ENCODE measurements at regions of chr5 and their contacts with region 1.

Region 1: GRCh38 chr5:34522599-34523386 is 133.3 kb upstream of the RAI14 start:
- DNase-seq: peak; percentile 73
- H3K4me3 Mint-ChIP-seq: no peak overlapping the region
- H3K27ac Mint-ChIP-seq: peak overlapping the region; percentile 34
- H3K4me1 Mint-ChIP-seq: peaks cover 17% of the 10 kb centered on the region
- H3K27me3 Mint-ChIP-seq: no peaks in the 10 kb centered on the region
- CTCF ChIP-seq: peak; percentile 55

Region 2: GRCh38 chr5:34486160-34486848 is 36.5 kb before region 1 on chr5:
- CTCF ChIA-PET with region 1: no interaction called
- intact Hi-C with region 1: loop called (anchors 5 kb)
- DNase-seq: peak; percentile 76
- H3K4me3 Mint-ChIP-seq: no peak overlapping the region
- H3K27ac Mint-ChIP-seq: no peak overlapping the region
- H3K4me1 Mint-ChIP-seq: peaks cover 32% of the 10 kb centered on the region
- H3K27me3 Mint-ChIP-seq: no peaks in the 10 kb centered on the region
- CTCF ChIP-seq: peak; percentile 70

Region 3: GRCh38 chr5:34570721-34571676 is 48.2 kb after region 1 on chr5:
- CTCF ChIA-PET with region 1: no interaction called
- intact Hi-C with region 1: no loop called
- DNase-seq: no peak
- H3K4me3 Mint-ChIP-seq: no peak overlapping the region
- H3K27ac Mint-ChIP-seq: no peak overlapping the region
- H3K4me1 Mint-ChIP-seq: peaks cover 15% of the 10 kb centered on the region
- H3K27me3 Mint-ChIP-seq: no peaks in the 10 kb centered on the region
- CTCF ChIP-seq: no peak

Region 4: GRCh38 chr5:34587355-34588241 is 64.8 kb after region 1 on chr5:
- CTCF ChIA-PET with region 1: interaction called, 3 read pairs
- intact Hi-C with region 1: loop called (anchors 5 kb)
- DNase-seq: no peak
- H3K4me3 Mint-ChIP-seq: no peak overlapping the region
- H3K27ac Mint-ChIP-seq: peak overlapping the region; percentile 55
- H3K4me1 Mint-ChIP-seq: peaks cover 40% of the 10 kb centered on the region
- H3K27me3 Mint-ChIP-seq: no peaks in the 10 kb centered on the region
- CTCF ChIP-seq: no peak

Region 5: DNA sequence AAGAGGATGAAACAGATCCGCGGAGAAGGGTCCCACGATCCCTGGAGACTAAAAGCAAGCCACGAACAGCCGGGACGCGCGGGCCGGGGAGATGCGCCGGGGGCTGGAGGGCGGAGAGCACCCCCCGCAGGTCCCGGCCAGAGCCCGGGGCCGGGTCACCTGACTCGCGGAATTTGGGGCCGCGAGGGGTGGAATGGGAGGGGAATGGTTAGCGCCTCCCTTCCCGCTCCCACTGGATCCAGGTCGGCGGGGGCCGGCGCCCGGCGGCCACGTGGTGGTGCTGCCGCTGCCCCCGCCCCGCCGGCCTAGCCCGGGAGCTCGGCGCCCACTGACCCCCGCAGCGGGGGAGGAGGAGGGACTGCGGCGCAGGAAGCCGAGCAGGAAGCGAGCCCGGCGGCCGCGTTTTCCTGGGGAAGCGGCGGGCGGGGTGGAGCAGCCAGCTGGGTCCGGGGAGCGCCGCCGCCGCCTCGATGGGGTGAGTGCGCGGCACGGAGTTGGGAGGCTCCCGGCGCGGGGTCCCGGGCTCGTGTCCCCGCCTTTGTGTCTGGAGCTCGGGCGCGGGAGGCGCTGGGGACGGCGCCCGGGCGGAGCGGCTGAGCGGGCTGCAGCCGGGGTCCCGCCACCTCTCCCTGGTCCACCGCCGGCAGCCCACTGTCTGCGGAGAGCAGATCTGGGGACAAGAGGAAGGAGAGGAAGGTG is 133.4 kb after region 1 on chr5 and contains the start of gene RAI14:
- CTCF ChIA-PET with region 1: interaction called, 3 read pairs
- intact Hi-C with region 1: loop called (anchors 2 kb)
- DNase-seq: peak; percentile 88
- H3K4me3 Mint-ChIP-seq: peak within 1 kb of the TSS; percentile 60
- H3K27ac Mint-ChIP-seq: peak within 1 kb of the TSS; percentile 54
- H3K4me1 Mint-ChIP-seq: peaks cover 27% of the 10 kb centered on the region
- H3K27me3 Mint-ChIP-seq: no peaks in the 10 kb centered on the region
- CTCF ChIP-seq: no peak
- total RNA-seq, gene RAI14: 56.2 and 84.3 TPM in 2 replicates

Region 6: DNA sequence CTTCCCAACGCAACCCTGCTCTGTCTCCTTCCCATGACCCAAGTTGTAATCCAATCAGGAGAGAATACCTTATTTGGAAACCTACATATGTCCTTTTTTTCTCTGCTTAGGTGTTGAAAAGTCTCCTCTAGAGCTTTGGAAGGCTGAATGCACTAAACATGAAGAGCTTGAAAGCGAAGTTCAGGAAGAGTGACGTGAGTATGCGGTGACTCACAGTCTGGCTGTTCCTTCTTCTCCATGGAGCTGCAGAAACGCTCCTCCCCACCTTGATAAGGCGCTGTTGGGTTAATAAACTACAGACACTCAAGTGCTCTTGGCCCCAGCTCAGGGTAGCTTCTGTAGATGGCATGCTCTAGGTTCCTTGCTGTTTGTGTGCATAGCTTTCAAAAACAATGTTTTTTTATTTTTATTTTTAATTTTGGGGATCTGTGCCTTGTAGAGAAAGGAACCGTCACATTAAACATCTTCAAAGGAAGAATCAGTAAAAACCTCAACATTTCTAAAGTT is 164.0 kb after region 1 on chr5:
- CTCF ChIA-PET with region 1: interaction called, 6 read pairs
- intact Hi-C with region 1: loop called (anchors 10 kb)
- DNase-seq: peak; percentile 84
- H3K4me3 Mint-ChIP-seq: peak overlapping the region; percentile 60
- H3K27ac Mint-ChIP-seq: peak overlapping the region; percentile 93
- H3K4me1 Mint-ChIP-seq: peaks cover 67% of the 10 kb centered on the region
- H3K27me3 Mint-ChIP-seq: no peaks in the 10 kb centered on the region
- CTCF ChIP-seq: no peak

Region 7: GRCh38 chr5:34717426-34718327 is 194.9 kb after region 1 on chr5:
- CTCF ChIA-PET with region 1: no interaction called
- intact Hi-C with region 1: no loop called
- DNase-seq: no peak
- H3K4me3 Mint-ChIP-seq: no peak overlapping the region
- H3K27ac Mint-ChIP-seq: no peak overlapping the region
- H3K4me1 Mint-ChIP-seq: peaks cover 33% of the 10 kb centered on the region
- H3K27me3 Mint-ChIP-seq: no peaks in the 10 kb centered on the region
- CTCF ChIP-seq: no peak

Region 8: DNA sequence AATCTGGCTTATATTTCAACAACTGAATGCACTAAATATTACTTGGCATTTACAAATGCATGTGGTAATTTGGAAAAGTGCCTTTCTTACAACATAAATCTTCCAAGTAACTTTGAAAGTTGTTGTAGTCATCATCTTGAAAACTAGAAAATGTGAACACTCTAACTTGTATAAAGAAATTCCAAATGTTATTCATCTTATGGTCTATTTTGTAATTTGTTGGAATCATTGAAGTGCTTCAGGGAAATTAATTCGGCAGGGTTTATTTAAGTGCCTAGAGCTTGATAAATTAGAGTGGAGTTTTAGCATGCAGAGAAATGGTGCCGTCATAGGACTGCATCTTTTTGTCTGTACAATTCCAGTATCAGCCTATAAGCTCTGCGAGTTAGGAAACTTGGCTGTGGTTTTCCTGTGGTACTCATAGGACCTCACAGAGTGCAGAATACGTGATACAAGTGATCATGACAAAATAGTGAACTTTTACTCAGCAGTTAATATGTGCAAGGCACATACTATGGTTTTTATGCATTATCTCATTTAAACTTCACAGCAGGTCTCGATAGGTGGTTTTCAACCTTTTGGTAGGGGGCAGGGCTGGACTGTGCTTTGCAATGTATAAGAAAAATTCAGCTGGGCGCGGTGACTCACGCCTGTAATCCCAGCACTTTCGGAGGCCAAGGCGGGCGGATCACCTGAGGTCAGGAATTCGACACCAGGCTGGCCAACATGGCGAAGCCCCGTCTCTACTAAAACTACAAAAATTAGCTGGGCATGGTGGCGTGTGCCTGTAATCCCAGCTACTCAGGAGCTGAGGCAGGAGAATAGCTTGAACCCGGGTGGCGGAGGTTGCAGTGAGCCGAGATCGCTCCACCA is 212.9 kb after region 1 on chr5:
- CTCF ChIA-PET with region 1: no interaction called
- intact Hi-C with region 1: loop called (anchors 5 kb)
- DNase-seq: no peak
- H3K4me3 Mint-ChIP-seq: no peak overlapping the region
- H3K27ac Mint-ChIP-seq: no peak overlapping the region
- H3K4me1 Mint-ChIP-seq: peaks cover 19% of the 10 kb centered on the region
- H3K27me3 Mint-ChIP-seq: no peaks in the 10 kb centered on the region
- CTCF ChIP-seq: no peak

Region 9: GRCh38 chr5:34898258-34898895 is 375.6 kb after region 1 on chr5:
- CTCF ChIA-PET with region 1: interaction called, 3 read pairs
- intact Hi-C with region 1: loop called (anchors 1 kb)
- DNase-seq: peak; percentile 65
- H3K4me3 Mint-ChIP-seq: no peak overlapping the region
- H3K27ac Mint-ChIP-seq: no peak overlapping the region
- H3K4me1 Mint-ChIP-seq: no peaks in the 10 kb centered on the region
- H3K27me3 Mint-ChIP-seq: no peaks in the 10 kb centered on the region
- CTCF ChIP-seq: peak; percentile 58

Measured in Calu3 (cell line).